Heart left ventricle (tissue), 16 donors: ENCODE measurements at regions of chr15 and their contacts with region 1.

Region 1: DNA sequence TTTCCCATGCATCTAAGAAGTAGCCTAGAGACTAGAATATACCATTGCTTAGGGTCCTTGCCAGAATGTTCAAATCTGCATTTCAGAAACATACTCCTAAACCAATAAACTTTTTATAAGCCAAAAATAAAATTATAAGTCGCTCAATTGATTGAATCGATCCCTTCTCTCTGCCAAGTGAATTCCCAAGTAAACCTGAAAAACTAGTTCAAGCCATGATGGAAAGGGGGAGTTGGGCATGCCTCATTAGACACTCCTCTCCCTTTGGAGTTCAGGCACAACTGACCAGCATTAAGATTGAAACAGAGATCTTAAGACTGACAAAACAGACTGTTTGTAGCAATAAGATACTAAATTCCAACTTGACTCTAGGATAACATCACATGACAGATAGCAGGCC is 113.6 kb upstream of the RASGRP1 start:
- DNase-seq: no peak
- ATAC-seq: no peak
- H3K4me3 ChIP-seq: no peak overlapping the region
- H3K27ac ChIP-seq: no peak overlapping the region
- H3K4me1 ChIP-seq: peaks cover 0 to 13% (median 0%) of the 10 kb centered on the region in 12 donors
- H3K27me3 ChIP-seq: peaks cover 0 to 3% (median 0%) of the 10 kb centered on the region in 9 donors
- CTCF ChIP-seq: no peak
- POLR2A ChIP-seq: no peak

Region 2: GRCh38 chr15:38479266-38479665 is 199.0 kb before region 1 on chr15:
- intact Hi-C with region 1: loop called in 9 of 10 experiments (anchors 5 to 10 kb)
- DNase-seq: no peak
- ATAC-seq: no peak
- H3K4me3 ChIP-seq: no peak overlapping the region
- H3K27ac ChIP-seq: no peak overlapping the region
- H3K4me1 ChIP-seq: peaks cover 0 to 9% (median 0%) of the 10 kb centered on the region in 12 donors
- H3K27me3 ChIP-seq: no peaks in the 10 kb centered on the region
- CTCF ChIP-seq: no peak
- POLR2A ChIP-seq: no peak

Region 3: GRCh38 chr15:38593524-38593923 is 84.7 kb before region 1 on chr15:
- intact Hi-C with region 1: no loop called
- DNase-seq: no peak
- ATAC-seq: no peak
- H3K4me3 ChIP-seq: no peak overlapping the region
- H3K27ac ChIP-seq: no peak overlapping the region
- H3K4me1 ChIP-seq: peaks cover 0 to 3% (median 0%) of the 10 kb centered on the region in 12 donors
- H3K27me3 ChIP-seq: peaks cover 0 to 3% (median 0%) of the 10 kb centered on the region in 9 donors
- CTCF ChIP-seq: no peak
- POLR2A ChIP-seq: no peak

Region 4: GRCh38 chr15:38724827-38725226 is 46.6 kb after region 1 on chr15:
- intact Hi-C with region 1: loop called in 1 of 10 experiments (anchors 5 kb)
- DNase-seq: no peak
- ATAC-seq: no peak
- H3K4me3 ChIP-seq: no peak overlapping the region
- H3K27ac ChIP-seq: no peak overlapping the region
- H3K4me1 ChIP-seq: no peaks in the 10 kb centered on the region
- H3K27me3 ChIP-seq: peaks cover 0 to 2% (median 0%) of the 10 kb centered on the region in 9 donors
- CTCF ChIP-seq: no peak
- POLR2A ChIP-seq: no peak

Region 5: DNA sequence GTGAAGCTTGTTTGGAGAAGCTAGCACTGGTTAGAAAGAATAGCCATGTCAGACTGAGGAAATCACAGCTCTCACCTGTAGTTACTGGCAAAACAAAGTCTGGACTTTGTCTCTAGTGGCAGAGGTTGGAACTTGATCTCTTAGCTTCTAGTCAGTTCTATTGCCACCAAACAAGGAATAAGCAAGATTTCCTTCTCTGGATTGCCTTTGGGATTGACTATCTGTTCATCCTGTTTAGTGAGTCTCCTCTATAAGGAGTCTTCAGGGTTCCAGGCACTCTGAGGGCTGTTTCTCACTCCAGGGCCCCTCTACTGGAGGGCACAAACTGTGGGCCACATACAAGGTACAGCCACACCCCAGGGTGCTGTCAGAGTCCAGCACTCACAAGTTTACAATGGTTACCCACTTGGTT is 476.0 kb after region 1 on chr15:
- intact Hi-C with region 1: no loop called
- DNase-seq: no peak
- ATAC-seq: no peak
- H3K4me3 ChIP-seq: no peak overlapping the region
- H3K27ac ChIP-seq: peak overlapping the region in 1 of 12 donors; percentile 41
- H3K4me1 ChIP-seq: peaks cover 0 to 25% (median 0%) of the 10 kb centered on the region in 12 donors
- H3K27me3 ChIP-seq: no peaks in the 10 kb centered on the region
- CTCF ChIP-seq: peak in 2 of 12 donors; percentile 11 to 16
- POLR2A ChIP-seq: no peak